GM10248 (cell line): ENCODE measurements at regions of chr6 and their contacts with region 1.

Region 1: GRCh38 chr6:31079656-31080261 is 32.6 kb downstream of the C6orf15 start:
- DNase-seq: peak; percentile 69
- CTCF ChIP-seq: peak; percentile 78

Region 2: DNA sequence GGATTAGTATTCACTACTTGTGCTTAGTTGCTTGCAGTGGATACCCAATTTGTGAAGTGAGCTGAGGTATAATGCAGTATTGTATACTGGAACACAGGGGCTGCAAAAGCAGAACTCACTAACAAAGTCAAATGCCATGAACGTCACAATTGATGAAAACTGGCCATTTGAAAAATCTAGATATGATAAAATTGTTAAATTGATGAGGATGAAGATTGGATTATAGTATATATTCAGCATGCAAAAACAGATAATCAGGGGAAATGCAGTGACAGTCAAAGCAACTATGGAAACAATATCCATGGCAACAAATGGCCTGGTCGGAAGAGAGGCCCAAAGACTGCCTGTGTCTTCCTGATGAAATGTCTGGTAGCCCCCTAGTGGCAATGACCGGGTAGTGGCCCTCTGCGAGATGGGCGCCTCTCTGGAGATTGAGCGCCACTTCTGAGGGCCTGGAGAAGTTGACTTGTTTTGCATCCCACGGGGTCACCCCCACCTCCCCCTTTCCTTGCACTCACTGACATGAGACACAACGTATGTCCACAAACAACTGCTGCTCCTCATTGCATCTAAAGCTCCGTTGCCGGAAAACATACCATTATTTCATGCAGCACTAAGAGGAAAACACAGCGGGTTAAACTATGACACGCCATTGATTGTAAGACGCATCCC is 11.0 kb before region 1 on chr6:
- CTCF ChIA-PET with region 1: interaction called, 51 read pairs
- POLR2A ChIA-PET with region 1: no interaction called
- DNase-seq: peak; percentile 85
- CTCF ChIP-seq: peak; percentile 68

Region 3: DNA sequence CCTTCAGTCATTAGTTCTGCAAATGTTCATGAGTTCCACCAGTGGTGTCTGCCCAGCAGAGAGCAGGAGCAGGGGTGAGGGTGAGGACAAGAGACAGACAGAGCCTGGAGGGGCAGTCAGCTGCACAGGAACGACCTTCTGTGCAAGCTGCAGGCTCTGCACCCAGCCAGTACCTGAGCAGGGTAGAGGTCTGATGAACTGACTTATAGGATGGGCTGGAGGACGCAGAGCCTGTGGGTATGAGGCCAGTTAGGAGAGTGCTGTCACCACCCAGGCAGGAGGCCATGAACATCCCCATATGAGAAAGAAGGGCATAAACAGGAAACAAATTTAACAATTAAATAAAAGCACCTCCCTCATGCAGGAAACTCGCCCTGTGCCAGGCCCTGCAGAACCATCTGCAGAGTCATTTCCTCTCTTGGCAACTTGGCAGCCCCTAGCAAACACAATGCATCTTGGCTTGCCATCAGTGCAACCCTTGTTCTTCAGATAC is 14.7 kb after region 1 on chr6:
- CTCF ChIA-PET with region 1: interaction called, 25 read pairs
- POLR2A ChIA-PET with region 1: no interaction called
- DNase-seq: no peak
- CTCF ChIP-seq: no peak